ENCODE measurements at regions of chr18 and their contacts with region 1.

Region 1: GRCh38 chr18:59083136-59083818 is 56.4 kb upstream of the SEC11C start:
- DNase-seq: peak in 2 of 10 donors; percentile 19 to 54

Region 2: DNA sequence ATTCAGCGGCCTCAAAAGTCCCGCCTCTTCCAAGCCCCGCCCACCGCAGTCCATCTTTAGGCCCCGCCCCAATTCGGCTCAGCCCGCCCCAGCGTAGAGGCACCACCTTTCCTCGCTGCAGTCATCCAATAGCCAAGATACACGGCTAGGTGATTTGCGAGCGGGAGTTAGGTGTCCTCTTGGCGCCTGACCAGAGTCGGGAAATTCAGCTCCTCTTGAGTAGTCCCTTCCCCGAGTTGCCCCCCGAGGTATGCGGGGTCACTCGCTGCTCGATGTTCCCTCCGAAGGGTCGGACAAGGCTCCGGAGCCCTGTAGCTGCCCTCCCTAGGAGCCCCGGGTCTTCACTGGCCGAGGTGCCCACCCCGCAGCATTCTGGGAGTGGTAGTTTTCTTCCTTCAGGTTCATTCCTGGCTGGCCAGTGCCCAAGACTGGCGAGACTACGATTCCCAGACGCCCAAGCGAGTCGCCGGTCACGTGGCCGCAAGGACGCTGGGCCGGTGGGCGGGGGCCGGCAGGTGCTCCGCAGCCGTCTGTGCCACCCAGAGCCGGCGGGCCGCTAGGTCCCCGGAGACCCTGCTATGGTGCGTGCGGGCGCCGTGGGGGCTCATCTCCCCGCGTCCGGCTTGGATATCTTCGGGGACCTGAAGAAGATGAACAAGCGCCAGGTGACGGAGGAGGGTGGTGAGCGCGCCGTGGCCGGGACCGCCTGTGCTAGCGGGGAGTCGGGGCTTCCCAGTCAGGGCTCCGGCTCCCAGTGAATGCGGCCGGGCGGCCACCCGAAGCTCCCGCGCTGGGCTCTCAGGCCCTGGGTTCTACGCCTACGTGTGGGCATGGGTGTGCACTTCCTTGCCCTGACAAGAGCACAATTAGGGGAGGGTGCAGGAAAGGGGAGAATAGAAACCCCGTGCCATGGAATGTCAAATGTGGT is 56.4 kb after region 1 on chr18 and contains the start of gene SEC11C:
- intact Hi-C with region 1: loop called (anchors 5 kb)
- DNase-seq: peak; percentile 97 to 100 (median 99)